ENCODE measurements at regions of chr2 and their contacts with region 1.

Region 1: DNA sequence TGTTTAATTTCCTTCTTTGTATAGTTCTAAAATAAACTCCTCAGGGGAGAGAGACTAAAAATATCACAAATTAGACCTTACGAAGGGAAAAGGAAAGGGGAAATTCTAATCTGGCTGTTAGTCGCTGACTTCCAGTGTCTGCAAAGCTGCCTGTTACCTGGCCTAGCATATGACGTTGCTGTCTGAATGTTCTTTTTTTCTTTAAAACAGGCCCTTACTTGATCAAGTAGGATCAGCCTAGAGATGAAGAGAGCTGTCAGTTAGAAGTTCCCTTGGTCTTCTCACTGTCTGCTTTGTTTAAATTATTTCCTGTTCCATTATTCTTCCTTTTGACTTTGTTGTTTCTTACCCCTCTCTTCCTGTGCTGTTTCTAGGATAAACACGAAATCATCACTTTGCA is 11.2 kb downstream of the NCK2 start:
- DNase-seq: peak; percentile 44
- H3K4me3 ChIP-seq: no peak overlapping the region
- H3K27ac ChIP-seq: no peak overlapping the region
- H3K4me1 ChIP-seq: peaks cover 11% of the 10 kb centered on the region
- H3K27me3 ChIP-seq: no peaks in the 10 kb centered on the region
- CTCF ChIP-seq: no peak

Region 2: DNA sequence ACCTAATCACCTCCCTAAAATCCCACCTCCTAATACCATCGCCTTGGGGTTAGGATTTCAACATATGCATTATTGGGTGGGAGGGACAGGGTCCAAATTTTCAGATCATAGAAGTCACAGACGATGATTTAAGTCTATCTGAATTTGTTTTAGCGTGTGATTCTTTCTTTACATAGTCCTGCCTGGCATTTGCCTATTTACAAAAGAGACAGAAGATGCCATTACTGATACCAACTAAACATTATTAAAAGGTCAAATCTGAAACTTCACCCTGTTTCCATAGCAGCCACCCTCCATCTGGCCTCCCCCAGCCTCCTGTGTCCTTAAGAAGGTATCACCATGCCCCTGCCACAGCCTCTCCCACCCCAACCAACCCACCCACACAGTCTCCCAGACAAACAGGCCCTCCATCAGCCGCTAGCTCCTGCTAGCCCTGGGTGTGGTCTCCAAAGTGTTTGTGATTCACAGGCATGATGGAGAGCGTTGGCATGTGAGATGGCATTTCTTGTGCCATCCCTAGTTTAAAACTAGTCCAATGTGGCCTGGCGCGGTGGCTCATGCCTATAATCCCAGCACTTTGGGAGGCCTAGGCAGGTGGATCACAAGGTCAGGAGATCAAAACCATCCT is 559.4 kb before region 1 on chr2:
- CTCF ChIA-PET with region 1: no interaction called
- dilution Hi-C with region 1: no loop called
- in situ Hi-C with region 1: no loop called
- intact Hi-C with region 1: no loop called
- DNase-seq: no peak
- H3K4me3 ChIP-seq: no peak overlapping the region
- H3K27ac ChIP-seq: no peak overlapping the region
- H3K4me1 ChIP-seq: no peaks in the 10 kb centered on the region
- H3K27me3 ChIP-seq: peaks cover 2% of the 10 kb centered on the region
- CTCF ChIP-seq: no peak

Region 3: GRCh38 chr2:105652014-105652796 is 103.7 kb before region 1 on chr2:
- CTCF ChIA-PET with region 1: interaction called, 12 read pairs
- dilution Hi-C with region 1: no loop called
- in situ Hi-C with region 1: no loop called
- intact Hi-C with region 1: no loop called
- DNase-seq: no peak
- H3K4me3 ChIP-seq: no peak overlapping the region
- H3K27ac ChIP-seq: no peak overlapping the region
- H3K4me1 ChIP-seq: no peaks in the 10 kb centered on the region
- H3K27me3 ChIP-seq: no peaks in the 10 kb centered on the region
- CTCF ChIP-seq: no peak

Region 4: DNA sequence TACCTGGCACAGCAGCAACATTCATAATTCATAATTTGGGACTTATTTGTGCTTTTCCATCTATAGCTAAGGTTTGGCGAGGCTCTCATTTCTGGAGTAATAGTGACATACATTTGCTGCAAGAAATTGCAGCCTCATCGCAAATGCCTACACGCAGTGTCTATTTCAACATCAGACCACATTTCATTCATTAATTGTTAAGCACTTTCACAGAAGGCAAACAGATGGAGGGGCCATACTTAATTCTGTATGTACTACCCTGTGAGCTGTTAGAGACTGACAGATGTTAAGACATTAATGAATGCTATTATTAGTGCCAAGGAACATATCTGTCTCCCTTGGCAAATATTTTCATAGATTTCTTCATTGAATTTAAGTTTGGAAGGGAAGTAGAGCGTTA is 312.6 kb after region 1 on chr2:
- CTCF ChIA-PET with region 1: no interaction called
- dilution Hi-C with region 1: no loop called
- in situ Hi-C with region 1: no loop called
- intact Hi-C with region 1: no loop called
- DNase-seq: no peak
- H3K4me3 ChIP-seq: no peak overlapping the region
- H3K27ac ChIP-seq: no peak overlapping the region
- H3K4me1 ChIP-seq: peaks cover 8% of the 10 kb centered on the region
- H3K27me3 ChIP-seq: no peaks in the 10 kb centered on the region
- CTCF ChIP-seq: no peak

Region 5: GRCh38 chr2:106137731-106138521 is 382.0 kb after region 1 on chr2:
- CTCF ChIA-PET with region 1: no interaction called
- dilution Hi-C with region 1: no loop called
- in situ Hi-C with region 1: no loop called
- intact Hi-C with region 1: no loop called
- DNase-seq: no peak
- H3K4me3 ChIP-seq: no peak overlapping the region
- H3K27ac ChIP-seq: no peak overlapping the region
- H3K4me1 ChIP-seq: peaks cover 5% of the 10 kb centered on the region
- H3K27me3 ChIP-seq: no peaks in the 10 kb centered on the region
- CTCF ChIP-seq: no peak

Measured in mammary epithelial cell (primary cell).